Activated CD4-positive, alpha-beta memory T cell treated with anti-CD3 and anti-CD28 coated beads for 36 hours (primary cell): ENCODE measurements at regions of chr5 and their contacts with region 1.

Region 1: DNA sequence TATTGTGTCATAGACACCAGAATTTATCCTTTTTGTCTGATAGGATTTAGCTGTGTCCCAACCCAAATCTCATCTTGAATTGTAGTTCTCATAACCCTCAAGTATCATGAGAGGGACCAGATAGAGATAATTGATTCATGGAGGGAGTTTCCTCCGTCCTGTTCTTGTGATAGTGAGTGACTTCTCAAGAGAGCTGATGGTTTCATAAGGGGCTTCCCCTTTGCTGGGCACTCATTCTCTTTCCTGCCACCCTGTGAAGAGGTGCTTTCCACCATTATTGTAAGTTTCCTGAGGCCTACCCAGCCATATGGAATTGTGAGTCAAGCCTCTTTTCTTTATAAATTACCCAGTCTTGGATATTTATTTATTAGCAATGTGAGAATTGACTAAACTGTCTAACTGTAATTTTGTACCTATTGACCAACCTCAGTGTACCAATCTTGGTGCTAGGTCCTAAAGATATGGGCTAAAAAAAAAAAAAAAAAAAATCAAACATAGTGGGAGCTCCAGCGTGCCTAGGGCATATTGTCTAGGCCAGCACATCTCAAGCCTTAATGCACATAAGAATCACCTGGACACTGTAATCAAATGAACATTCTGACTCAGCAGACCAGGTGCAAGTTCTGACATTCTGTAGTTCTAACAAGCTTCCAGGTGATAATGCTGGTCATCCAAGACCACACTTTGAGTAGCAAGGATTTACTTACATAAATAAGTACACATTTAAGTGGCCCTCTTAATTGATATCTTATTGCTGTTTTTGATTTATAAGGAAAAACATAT is 30.5 kb downstream of the ST8SIA4 start:
- DNase-seq: peak; percentile 55
- H3K4me3 Mint-ChIP-seq: no peak overlapping the region
- H3K27ac Mint-ChIP-seq: peak overlapping the region; percentile 73
- H3K4me1 Mint-ChIP-seq: peaks cover 46% of the 10 kb centered on the region
- H3K27me3 Mint-ChIP-seq: no peaks in the 10 kb centered on the region

Region 2: DNA sequence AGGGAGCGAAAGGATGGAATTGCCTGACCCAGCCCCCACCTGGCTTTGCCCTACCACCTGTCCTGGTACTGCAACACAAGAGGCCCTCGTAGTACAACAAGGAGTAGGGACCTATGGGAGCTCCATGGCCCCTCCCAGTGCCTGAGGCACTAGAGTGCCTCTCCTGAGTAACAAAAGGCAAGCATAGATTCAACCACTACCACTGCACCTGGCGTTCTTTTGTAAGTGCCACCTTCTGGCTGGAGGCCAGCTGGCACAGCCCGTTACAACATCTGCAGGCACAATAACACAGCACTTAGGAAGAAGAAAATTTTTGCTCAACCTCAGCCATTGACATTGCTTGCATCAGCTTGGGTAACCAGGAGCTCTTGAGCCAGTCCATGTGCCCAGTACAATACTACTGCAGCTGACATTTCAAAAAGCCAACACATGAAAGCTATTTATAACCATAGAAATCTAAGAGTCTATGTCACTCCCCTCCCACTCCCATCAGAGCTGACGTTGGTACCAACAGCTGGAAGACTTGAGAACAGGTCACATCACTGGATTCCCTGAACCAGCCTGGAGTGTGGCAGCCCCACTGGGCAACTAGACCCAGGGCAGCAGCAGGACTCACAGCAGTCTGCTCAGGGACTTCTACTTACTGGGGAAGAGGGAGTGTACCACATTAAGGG is 355.2 kb before region 1 on chr5:
- CTCF ChIA-PET with region 1: no interaction called
- POLR2A ChIA-PET with region 1: no interaction called
- intact Hi-C with region 1: no loop called
- DNase-seq: no peak
- H3K4me3 Mint-ChIP-seq: no peak overlapping the region
- H3K27ac Mint-ChIP-seq: no peak overlapping the region
- H3K4me1 Mint-ChIP-seq: no peaks in the 10 kb centered on the region
- H3K27me3 Mint-ChIP-seq: peaks cover 9% of the 10 kb centered on the region

Region 3: DNA sequence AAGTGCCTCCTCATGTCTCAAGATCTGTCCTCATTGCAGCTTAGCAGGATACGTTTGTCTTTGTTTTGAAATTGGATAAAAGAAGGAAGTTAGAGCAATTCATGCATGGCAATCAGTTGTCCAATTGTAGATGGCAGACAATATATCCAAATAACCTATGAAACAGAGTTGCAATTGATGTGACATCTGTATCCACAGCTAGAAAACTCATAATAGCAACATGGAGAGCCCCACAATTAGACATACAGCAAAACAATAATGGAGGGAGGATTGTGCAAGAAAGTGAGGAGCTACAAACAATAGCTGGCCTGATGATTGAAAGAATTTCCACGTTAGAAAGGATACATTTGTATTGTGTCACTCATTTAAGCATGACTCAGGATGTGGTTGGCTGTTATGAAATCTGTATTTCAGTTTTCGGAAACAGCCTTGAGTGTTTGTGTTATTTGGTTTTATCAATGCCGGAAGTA is 205.4 kb before region 1 on chr5:
- CTCF ChIA-PET with region 1: no interaction called
- POLR2A ChIA-PET with region 1: no interaction called
- intact Hi-C with region 1: no loop called
- DNase-seq: no peak
- H3K4me3 Mint-ChIP-seq: no peak overlapping the region
- H3K27ac Mint-ChIP-seq: no peak overlapping the region
- H3K4me1 Mint-ChIP-seq: peaks cover 10% of the 10 kb centered on the region
- H3K27me3 Mint-ChIP-seq: no peaks in the 10 kb centered on the region

Region 4: GRCh38 chr5:100827481-100827889 is 45.1 kb before region 1 on chr5:
- CTCF ChIA-PET with region 1: no interaction called
- POLR2A ChIA-PET with region 1: no interaction called
- intact Hi-C with region 1: loop called (anchors 1 kb)
- DNase-seq: peak; percentile 23
- H3K4me3 Mint-ChIP-seq: no peak overlapping the region
- H3K27ac Mint-ChIP-seq: peak overlapping the region; percentile 79
- H3K4me1 Mint-ChIP-seq: peaks cover 43% of the 10 kb centered on the region
- H3K27me3 Mint-ChIP-seq: no peaks in the 10 kb centered on the region

Region 5: DNA sequence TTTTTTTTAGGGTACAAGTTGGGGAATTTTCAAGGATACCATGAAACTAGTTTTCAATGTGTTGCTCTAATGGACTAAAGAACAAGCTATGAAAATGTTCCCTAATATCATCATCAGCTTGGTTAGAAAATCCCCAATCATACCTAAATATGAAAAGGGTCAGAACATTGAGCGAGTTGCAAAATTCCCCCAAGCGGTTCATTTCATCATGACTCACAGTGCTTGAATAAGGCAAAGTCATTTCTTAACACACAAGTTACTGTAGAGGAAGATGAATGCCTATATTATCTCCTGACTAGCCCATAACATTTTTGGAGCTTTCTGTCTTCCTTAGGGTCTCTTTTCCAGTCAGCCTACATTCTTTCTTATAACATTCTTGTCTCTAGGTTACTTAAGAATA is 32.2 kb before region 1 on chr5:
- CTCF ChIA-PET with region 1: no interaction called
- POLR2A ChIA-PET with region 1: no interaction called
- intact Hi-C with region 1: loop called (anchors 1 kb)
- DNase-seq: peak; percentile 52
- H3K4me3 Mint-ChIP-seq: no peak overlapping the region
- H3K27ac Mint-ChIP-seq: peak overlapping the region; percentile 86
- H3K4me1 Mint-ChIP-seq: peaks cover 67% of the 10 kb centered on the region
- H3K27me3 Mint-ChIP-seq: no peaks in the 10 kb centered on the region

Region 6: GRCh38 chr5:100852988-100853449 is 19.6 kb before region 1 on chr5:
- CTCF ChIA-PET with region 1: no interaction called
- POLR2A ChIA-PET with region 1: no interaction called
- intact Hi-C with region 1: loop called (anchors 2 kb)
- DNase-seq: no peak
- H3K4me3 Mint-ChIP-seq: peak overlapping the region; percentile 69
- H3K27ac Mint-ChIP-seq: peak overlapping the region; percentile 95
- H3K4me1 Mint-ChIP-seq: peaks cover 40% of the 10 kb centered on the region
- H3K27me3 Mint-ChIP-seq: no peaks in the 10 kb centered on the region

Region 7: GRCh38 chr5:100860407-100860806 is 12.2 kb before region 1 on chr5:
- CTCF ChIA-PET with region 1: no interaction called
- POLR2A ChIA-PET with region 1: interaction called, 6 read pairs
- intact Hi-C with region 1: loop called (anchors 1 kb)
- DNase-seq: peak; percentile 26
- H3K4me3 Mint-ChIP-seq: no peak overlapping the region
- H3K27ac Mint-ChIP-seq: peak overlapping the region; percentile 80
- H3K4me1 Mint-ChIP-seq: peaks cover 65% of the 10 kb centered on the region
- H3K27me3 Mint-ChIP-seq: no peaks in the 10 kb centered on the region